GM12878 (cell line): ENCODE measurements at regions of chr18 and their contacts with region 1.

Region 1: DNA sequence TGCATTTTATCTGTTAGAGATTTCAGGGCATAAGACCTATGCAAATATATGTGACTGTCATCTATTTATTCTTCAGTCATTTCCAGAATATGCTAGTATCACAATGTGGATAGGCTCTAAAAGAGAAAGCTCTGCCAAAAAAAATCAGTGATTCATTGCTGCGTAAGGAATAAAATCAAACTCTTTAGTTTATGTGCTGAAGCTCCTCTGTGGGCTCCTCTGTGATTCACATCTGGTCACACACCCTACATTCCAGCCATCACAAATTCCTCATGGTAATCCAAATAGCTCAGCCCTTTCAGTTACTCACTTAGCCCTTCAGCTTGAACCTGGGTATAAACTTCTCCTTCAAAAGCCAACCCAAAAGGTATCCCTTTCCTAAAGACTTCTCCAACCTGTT is 21.4 kb downstream of the DLGAP1 start:
- DNase-seq: no peak
- ATAC-seq: no peak
- H3K4me3 ChIP-seq: no peak overlapping the region
- H3K27ac ChIP-seq: no peak overlapping the region
- H3K4me1 ChIP-seq: no peaks in the 10 kb centered on the region
- H3K27me3 ChIP-seq: no peaks in the 10 kb centered on the region
- CTCF ChIP-seq: no peak
- EP300 ChIP-seq: no peak
- POLR2A ChIP-seq: no peak
- RAD21 ChIP-seq: no peak

Region 2: DNA sequence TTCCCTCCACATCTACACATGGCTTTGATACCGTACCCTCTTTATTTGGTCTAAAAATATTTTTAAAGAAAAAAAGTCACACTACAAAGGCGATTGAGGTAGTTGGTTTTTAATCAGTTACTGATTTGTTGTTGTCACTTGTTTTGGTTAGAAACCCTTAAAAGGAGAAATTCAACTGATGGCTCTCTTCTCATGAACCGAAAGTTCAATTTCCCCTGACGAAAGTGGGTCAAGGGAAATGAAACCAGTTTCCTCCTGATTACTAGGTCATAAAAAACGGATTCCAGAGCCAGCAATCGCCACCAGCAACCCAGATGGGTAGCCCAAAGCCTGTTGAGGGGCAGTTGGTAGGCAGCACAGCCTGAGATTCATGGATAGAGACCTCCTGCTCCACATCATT is 41.9 kb before region 1 on chr18:
- CTCF ChIA-PET with region 1: interaction called, 3 read pairs
- POLR2A ChIA-PET with region 1: no interaction called
- RAD21 ChIA-PET with region 1: interaction called, 5 read pairs
- SMC1A ChIA-PET with region 1: interaction called, 9 read pairs
- in situ Hi-C with region 1: no loop called
- intact Hi-C with region 1: loop called (anchors 5 kb)
- DNase-seq: peak; percentile 60
- ATAC-seq: peak; percentile 65
- H3K4me3 ChIP-seq: no peak overlapping the region
- H3K27ac ChIP-seq: 0 out of 2 replicates have a peak overlapping the region, but pooled peaks have one; percentile 20
- H3K4me1 ChIP-seq: no peaks in the 10 kb centered on the region
- H3K27me3 ChIP-seq: no peaks in the 10 kb centered on the region
- CTCF ChIP-seq: no peak
- EP300 ChIP-seq: peak; percentile 96 to 99
- POLR2A ChIP-seq: no peak
- RAD21 ChIP-seq: no peak

Region 3: GRCh38 chr18:4444306-4444705 is 10.6 kb after region 1 on chr18:
- CTCF ChIA-PET with region 1: interaction called, 3 read pairs
- POLR2A ChIA-PET with region 1: interaction called, 7 read pairs
- RAD21 ChIA-PET with region 1: interaction called, 10 read pairs
- SMC1A ChIA-PET with region 1: interaction called, 28 read pairs
- in situ Hi-C with region 1: no loop called
- intact Hi-C with region 1: no loop called
- DNase-seq: no peak
- ATAC-seq: peak; percentile 50
- H3K4me3 ChIP-seq: no peak overlapping the region
- H3K27ac ChIP-seq: no peak overlapping the region
- H3K4me1 ChIP-seq: no peaks in the 10 kb centered on the region
- H3K27me3 ChIP-seq: no peaks in the 10 kb centered on the region
- CTCF ChIP-seq: no peak
- EP300 ChIP-seq: no peak
- POLR2A ChIP-seq: no peak
- RAD21 ChIP-seq: no peak

Region 4: GRCh38 chr18:4450065-4450658 is 16.4 kb after region 1 on chr18:
- CTCF ChIA-PET with region 1: interaction called, 3 read pairs
- POLR2A ChIA-PET with region 1: interaction called, 7 read pairs
- RAD21 ChIA-PET with region 1: interaction called, 10 read pairs
- SMC1A ChIA-PET with region 1: interaction called, 28 read pairs
- in situ Hi-C with region 1: no loop called
- intact Hi-C with region 1: no loop called
- DNase-seq: no peak
- ATAC-seq: peak; percentile 13
- H3K4me3 ChIP-seq: no peak overlapping the region
- H3K27ac ChIP-seq: no peak overlapping the region
- H3K4me1 ChIP-seq: no peaks in the 10 kb centered on the region
- H3K27me3 ChIP-seq: no peaks in the 10 kb centered on the region
- CTCF ChIP-seq: peak in 2 of 3 experiments; percentile 4 to 43; a peak in 2 of 6 replicates
- EP300 ChIP-seq: no peak
- POLR2A ChIP-seq: no peak
- RAD21 ChIP-seq: no peak

Region 5: DNA sequence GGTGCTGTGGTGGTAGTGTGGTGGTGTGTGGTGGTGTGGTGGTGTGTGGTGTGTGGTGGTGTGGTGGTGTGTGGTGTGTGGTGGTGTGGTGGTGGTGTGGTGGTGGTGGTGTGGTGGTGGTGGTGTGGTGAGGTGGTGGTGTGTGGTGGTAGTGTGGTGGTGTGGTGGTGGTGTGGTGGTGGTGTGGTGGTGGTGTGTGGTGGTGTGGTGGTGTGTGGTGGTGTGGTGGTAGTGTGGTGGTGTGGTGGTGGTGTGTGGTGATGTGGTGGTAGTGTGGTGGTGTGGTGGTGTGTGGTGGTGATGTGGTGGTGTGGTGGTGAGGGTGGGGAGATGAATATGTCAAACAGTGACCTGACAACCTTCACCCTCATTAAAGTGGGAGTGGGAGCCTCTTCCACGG is 77.0 kb after region 1 on chr18:
- CTCF ChIA-PET with region 1: no interaction called
- POLR2A ChIA-PET with region 1: no interaction called
- RAD21 ChIA-PET with region 1: no interaction called
- SMC1A ChIA-PET with region 1: no interaction called
- in situ Hi-C with region 1: no loop called
- intact Hi-C with region 1: no loop called
- DNase-seq: no peak
- ATAC-seq: peak; percentile 23; the same call in 2 of the 3 replicates
- H3K4me3 ChIP-seq: no peak overlapping the region
- H3K27ac ChIP-seq: no peak overlapping the region
- H3K4me1 ChIP-seq: no peaks in the 10 kb centered on the region
- H3K27me3 ChIP-seq: no peaks in the 10 kb centered on the region
- CTCF ChIP-seq: no peak
- EP300 ChIP-seq: no peak
- POLR2A ChIP-seq: no peak
- RAD21 ChIP-seq: no peak